GM12878 (cell line): ENCODE measurements at regions of chr16 and their contacts with region 1.

Region 1: DNA sequence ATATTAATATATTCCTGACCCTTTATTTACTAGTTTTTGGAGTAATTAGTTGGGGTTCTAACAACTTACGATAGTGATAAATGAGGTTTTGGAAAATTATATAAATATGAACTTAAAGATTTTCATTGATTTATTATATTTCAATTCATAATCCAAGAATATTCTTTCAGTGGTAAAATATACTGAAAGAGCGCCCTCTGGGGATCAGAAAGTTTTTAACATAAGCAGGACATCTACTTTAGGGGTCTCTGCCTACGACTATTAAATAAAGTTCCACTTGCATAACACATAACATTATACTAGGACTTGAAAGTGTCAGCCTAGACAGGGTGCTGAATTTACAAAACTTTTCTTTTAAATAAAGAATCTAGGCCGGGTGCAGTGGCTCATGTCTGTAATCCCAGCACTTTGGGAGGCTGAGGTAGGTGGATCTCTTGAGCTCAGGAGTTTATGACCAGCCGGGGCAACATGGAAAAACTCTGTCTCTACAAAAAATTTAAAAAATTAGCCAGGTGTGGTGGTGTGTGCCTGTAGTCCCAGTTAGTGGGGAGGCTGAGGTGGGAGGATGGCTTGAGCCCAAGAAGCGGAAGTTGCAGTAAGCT is 15.6 kb downstream of the RFWD3 start:
- DNase-seq: no peak
- ATAC-seq: 0 out of 3 replicates have a peak, but pooled peaks have one; percentile 23
- H3K4me3 ChIP-seq: no peak overlapping the region
- H3K27ac ChIP-seq: no peak overlapping the region
- H3K4me1 ChIP-seq: no peaks in the 10 kb centered on the region
- H3K27me3 ChIP-seq: no peaks in the 10 kb centered on the region
- CTCF ChIP-seq: peak in 2 of 3 experiments; percentile 36 to 39; a peak in 3 of 6 replicates
- EP300 ChIP-seq: no peak
- POLR2A ChIP-seq: no peak
- RAD21 ChIP-seq: no peak

Region 2: DNA sequence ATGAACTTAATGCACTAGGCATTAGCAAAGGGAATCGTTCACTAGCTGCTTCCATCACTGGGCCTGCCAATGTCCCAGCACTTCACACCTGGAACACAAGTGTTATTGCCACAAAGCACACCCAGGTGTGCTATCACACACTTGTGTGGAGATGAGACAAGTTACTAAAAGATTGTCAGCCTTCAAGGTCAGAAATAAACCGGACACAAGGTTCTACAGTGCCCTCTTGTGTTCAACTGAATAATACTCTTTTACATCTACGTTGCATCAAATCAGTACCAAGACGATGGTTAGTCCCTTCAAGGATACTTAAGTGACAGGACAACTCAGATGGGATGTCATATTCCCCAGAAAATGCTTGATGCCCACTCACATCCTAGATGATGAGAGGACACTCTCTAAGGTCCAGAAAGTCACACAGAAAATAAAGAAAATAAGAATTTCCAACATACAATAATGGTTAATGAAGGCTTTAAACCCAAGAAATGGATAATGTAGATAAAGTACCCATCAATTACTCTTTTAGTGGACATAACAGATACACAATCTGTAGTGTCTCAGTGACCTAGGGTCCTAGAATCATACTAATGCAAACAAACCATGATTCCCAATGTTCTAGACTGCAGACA is 27.7 kb before region 1 on chr16:
- CTCF ChIA-PET with region 1: interaction called, 24 read pairs
- POLR2A ChIA-PET with region 1: no interaction called
- RAD21 ChIA-PET with region 1: no interaction called
- SMC1A ChIA-PET with region 1: no interaction called
- in situ Hi-C with region 1: no loop called
- intact Hi-C with region 1: no loop called
- DNase-seq: no peak
- ATAC-seq: peak; percentile 76
- H3K4me3 ChIP-seq: no peak overlapping the region
- H3K27ac ChIP-seq: no peak overlapping the region
- H3K4me1 ChIP-seq: peaks cover 8% of the 10 kb centered on the region
- H3K27me3 ChIP-seq: no peaks in the 10 kb centered on the region
- CTCF ChIP-seq: peak; percentile 48 to 71 (median 68)
- EP300 ChIP-seq: no peak
- POLR2A ChIP-seq: no peak
- RAD21 ChIP-seq: peak; percentile 75

Region 3: GRCh38 chr16:74637742-74638453 is 13.2 kb before region 1 on chr16:
- CTCF ChIA-PET with region 1: interaction called, 17 read pairs
- POLR2A ChIA-PET with region 1: interaction called, 3 read pairs
- RAD21 ChIA-PET with region 1: interaction called, 3 read pairs
- SMC1A ChIA-PET with region 1: interaction called, 4 read pairs
- in situ Hi-C with region 1: no loop called
- intact Hi-C with region 1: no loop called
- DNase-seq: no peak
- ATAC-seq: no peak
- H3K4me3 ChIP-seq: no peak overlapping the region
- H3K27ac ChIP-seq: no peak overlapping the region
- H3K4me1 ChIP-seq: no peaks in the 10 kb centered on the region
- H3K27me3 ChIP-seq: no peaks in the 10 kb centered on the region
- CTCF ChIP-seq: no peak
- EP300 ChIP-seq: no peak
- POLR2A ChIP-seq: no peak
- RAD21 ChIP-seq: no peak

Region 4: DNA sequence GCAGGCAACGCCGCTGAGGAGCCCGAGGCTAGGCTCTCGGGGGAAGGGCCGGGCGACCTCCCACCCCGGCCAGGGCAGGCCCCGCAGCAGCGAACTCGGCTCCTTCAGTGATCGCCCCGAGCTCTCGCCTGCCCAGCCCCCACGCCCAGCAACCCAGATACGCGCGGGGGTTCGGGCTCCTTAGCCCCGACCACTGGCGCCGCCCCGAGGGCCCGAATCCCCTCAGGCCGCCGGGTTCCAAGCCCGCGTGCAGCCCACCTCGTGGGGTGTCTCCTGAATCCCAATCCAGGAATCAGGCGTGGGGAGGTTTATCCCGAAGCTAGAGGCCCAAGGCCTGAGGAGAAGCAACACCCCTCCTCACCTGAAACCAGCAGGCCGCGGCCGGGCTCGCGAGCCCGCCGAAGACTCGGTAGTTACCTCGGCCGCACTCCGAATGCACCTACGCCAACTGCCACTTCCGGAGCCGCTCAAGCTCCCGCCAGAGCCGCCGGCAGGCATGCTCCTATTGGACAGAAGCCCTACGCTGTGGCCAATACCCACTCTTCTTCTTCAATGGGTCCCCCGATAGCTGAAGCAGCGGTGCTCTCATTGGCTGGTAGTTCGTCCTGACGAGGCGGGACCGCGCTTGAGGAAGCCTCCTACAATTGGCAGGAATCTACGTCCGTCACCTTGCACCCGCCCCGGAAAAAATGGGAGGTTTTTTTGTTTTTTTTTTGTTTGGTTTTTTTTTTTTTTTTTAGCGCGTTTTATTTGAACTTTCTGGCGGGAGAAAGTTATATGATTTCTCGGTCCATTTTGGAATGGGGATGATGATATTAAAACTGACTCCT is 15.6 kb after region 1 on chr16 and contains the start of gene RFWD3:
- CTCF ChIA-PET with region 1: interaction called, 14 read pairs
- POLR2A ChIA-PET with region 1: interaction called, 22 read pairs
- RAD21 ChIA-PET with region 1: interaction called, 3 read pairs
- SMC1A ChIA-PET with region 1: interaction called, 7 read pairs
- in situ Hi-C with region 1: no loop called
- intact Hi-C with region 1: no loop called
- DNase-seq: peak; percentile 94
- ATAC-seq: peak; percentile 100
- H3K4me3 ChIP-seq: peak within 1 kb of the TSS; percentile 76
- H3K27ac ChIP-seq: peak within 1 kb of the TSS; percentile 89
- H3K4me1 ChIP-seq: peaks cover 5% of the 10 kb centered on the region
- H3K27me3 ChIP-seq: no peaks in the 10 kb centered on the region
- CTCF ChIP-seq: no peak
- EP300 ChIP-seq: no peak
- POLR2A ChIP-seq: peak; percentile 99
- RAD21 ChIP-seq: no peak
- polyA plus RNA-seq, gene RFWD3: 10.7 to 16.3 TPM

Region 5: DNA sequence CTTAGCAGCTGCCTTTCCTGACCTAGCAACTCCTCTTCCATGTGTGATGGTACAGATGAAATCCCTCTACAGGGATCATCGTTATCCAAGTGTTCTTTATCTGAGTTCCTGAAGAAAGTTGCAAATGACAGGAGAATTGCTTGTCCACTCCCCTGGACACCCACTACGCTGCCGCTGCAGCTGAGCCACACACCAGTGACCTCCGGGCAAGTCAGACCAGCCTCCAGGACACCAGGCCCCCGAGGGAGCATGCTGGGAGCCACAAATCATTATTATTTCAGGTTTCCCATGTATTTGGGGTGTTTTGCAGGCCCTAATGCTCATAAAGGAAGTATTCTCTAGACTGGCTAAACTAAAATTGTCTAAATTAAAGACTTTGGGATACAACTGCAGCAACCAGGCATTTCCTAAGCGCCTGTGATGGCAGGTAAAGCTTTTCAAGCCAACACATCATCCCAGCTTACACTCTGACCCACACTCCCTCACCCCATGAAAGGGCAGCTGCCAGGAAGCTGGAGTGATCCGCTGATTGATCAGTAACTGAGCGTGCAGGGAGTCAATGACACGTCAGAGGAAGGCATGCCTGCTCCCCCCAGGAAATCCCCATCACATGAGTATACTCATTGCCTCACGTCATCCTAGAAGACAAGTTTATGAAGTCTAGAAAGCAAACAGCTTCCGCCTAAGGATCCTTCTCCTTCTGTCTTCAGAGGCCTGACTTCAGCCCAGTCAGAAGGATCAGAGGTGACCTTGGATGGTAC is 109.1 kb after region 1 on chr16:
- CTCF ChIA-PET with region 1: no interaction called
- POLR2A ChIA-PET with region 1: no interaction called
- RAD21 ChIA-PET with region 1: no interaction called
- SMC1A ChIA-PET with region 1: no interaction called
- in situ Hi-C with region 1: no loop called
- intact Hi-C with region 1: no loop called
- DNase-seq: no peak
- ATAC-seq: peak; percentile 87
- H3K4me3 ChIP-seq: no peak overlapping the region
- H3K27ac ChIP-seq: no peak overlapping the region
- H3K4me1 ChIP-seq: no peaks in the 10 kb centered on the region
- H3K27me3 ChIP-seq: no peaks in the 10 kb centered on the region; a peak in 1 of 4 replicates
- CTCF ChIP-seq: no peak
- EP300 ChIP-seq: no peak
- POLR2A ChIP-seq: no peak
- RAD21 ChIP-seq: no peak

Region 6: GRCh38 chr16:74888208-74888852 is 237.3 kb after region 1 on chr16:
- CTCF ChIA-PET with region 1: no interaction called
- POLR2A ChIA-PET with region 1: no interaction called
- RAD21 ChIA-PET with region 1: no interaction called
- SMC1A ChIA-PET with region 1: no interaction called
- in situ Hi-C with region 1: no loop called
- intact Hi-C with region 1: no loop called
- DNase-seq: no peak
- ATAC-seq: no peak
- H3K4me3 ChIP-seq: no peak overlapping the region
- H3K27ac ChIP-seq: no peak overlapping the region
- H3K4me1 ChIP-seq: peaks cover 2% of the 10 kb centered on the region; the same call in 1 of the 2 replicates
- H3K27me3 ChIP-seq: no peaks in the 10 kb centered on the region
- CTCF ChIP-seq: no peak
- EP300 ChIP-seq: no peak
- POLR2A ChIP-seq: no peak
- RAD21 ChIP-seq: no peak